Ascending aorta (tissue), 2 donors: ENCODE measurements at regions of chr6 and their contacts with region 1.

Region 1: GRCh38 chr6:30326526-30327260 is at the start of gene TRIM39:
- DNase-seq: peak; percentile 47 to 93
- H3K4me3 ChIP-seq: peak within 1 kb of the TSS; percentile 76 to 95
- H3K27ac ChIP-seq: peak within 1 kb of the TSS; percentile 97 to 99
- H3K4me1 ChIP-seq: peaks cover 0 to 20% of the 10 kb centered on the region in 2 donors
- H3K27me3 ChIP-seq: no peaks in the 10 kb centered on the region
- CTCF ChIP-seq: no peak
- total RNA-seq, gene TRIM39: 2.8 TPM

Region 2: GRCh38 chr6:29632789-29633533 is 693.7 kb before region 1 on chr6 and contains the start of gene GABBR1:
- intact Hi-C with region 1: loop called (anchors 10 kb)
- DNase-seq: peak; percentile 42 to 94
- H3K4me3 ChIP-seq: peak within 1 kb of the TSS; percentile 77 to 81
- H3K27ac ChIP-seq: peak within 1 kb of the TSS; percentile 79 to 81
- H3K4me1 ChIP-seq: peaks cover 8 to 17% of the 10 kb centered on the region in 2 donors
- H3K27me3 ChIP-seq: no peaks in the 10 kb centered on the region
- CTCF ChIP-seq: no peak
- total RNA-seq, gene GABBR1: 166 TPM

Region 3: GRCh38 chr6:30100585-30101443 is 225.9 kb before region 1 on chr6:
- intact Hi-C with region 1: no loop called
- DNase-seq: no peak
- H3K4me3 ChIP-seq: peak overlapping the region; percentile 49 to 58
- H3K27ac ChIP-seq: no peak overlapping the region
- H3K4me1 ChIP-seq: peaks cover 7 to 18% of the 10 kb centered on the region in 2 donors
- H3K27me3 ChIP-seq: peaks cover 16% of the 10 kb centered on the region
- CTCF ChIP-seq: no peak

Region 4: GRCh38 chr6:30259140-30260035 is 67.3 kb before region 1 on chr6:
- intact Hi-C with region 1: loop called (anchors 2 kb)
- DNase-seq: peak; percentile 14 to 90
- H3K4me3 ChIP-seq: peak overlapping the region; percentile 82 to 84
- H3K27ac ChIP-seq: peak overlapping the region; percentile 85
- H3K4me1 ChIP-seq: peaks cover 0 to 5% of the 10 kb centered on the region in 2 donors
- H3K27me3 ChIP-seq: no peaks in the 10 kb centered on the region
- CTCF ChIP-seq: peak in 2 of 3 experiments; percentile 41 to 51

Region 5: GRCh38 chr6:30344868-30345671 is 18.4 kb after region 1 on chr6 and contains the start of gene RPP21:
- intact Hi-C with region 1: loop called (anchors 1 kb)
- DNase-seq: peak; percentile 28 to 88
- H3K4me3 ChIP-seq: peak within 1 kb of the TSS; percentile 79 to 85
- H3K27ac ChIP-seq: peak within 1 kb of the TSS; percentile 85 to 86
- H3K4me1 ChIP-seq: peaks cover 0 to 4% of the 10 kb centered on the region in 2 donors
- H3K27me3 ChIP-seq: no peaks in the 10 kb centered on the region
- CTCF ChIP-seq: no peak
- total RNA-seq, gene RPP21: 262 TPM

Region 6: DNA sequence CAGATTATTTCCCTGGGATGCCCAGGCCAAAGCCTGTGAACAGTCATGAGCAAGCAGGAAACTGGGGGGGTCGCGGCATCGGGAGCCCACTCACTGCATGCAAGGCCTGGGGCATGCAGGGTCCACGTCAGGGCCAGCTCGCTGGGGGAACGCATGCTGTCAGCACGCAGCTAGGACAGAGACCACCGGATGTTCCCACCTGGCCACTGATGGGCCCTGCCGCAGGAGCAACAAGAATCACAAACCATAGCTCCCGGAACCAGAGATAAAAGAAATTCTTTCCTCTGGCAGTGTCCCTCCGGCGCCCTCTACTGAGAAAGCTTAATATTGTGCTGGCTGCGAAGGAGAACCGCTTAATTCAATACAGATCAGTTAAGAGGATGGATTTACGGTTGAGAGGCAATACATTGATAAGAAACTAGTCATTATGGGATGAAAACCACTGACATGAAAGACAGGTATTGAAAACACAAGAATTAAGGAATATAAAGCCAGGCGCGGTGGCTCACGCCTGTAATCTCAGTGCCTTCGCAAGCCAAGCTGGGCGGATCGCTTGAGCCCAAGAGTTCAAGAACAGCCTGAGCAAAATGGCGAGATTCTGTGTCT is 753.1 kb after region 1 on chr6:
- intact Hi-C with region 1: no loop called
- DNase-seq: peak in 1 of 2 donors; percentile 78
- H3K4me3 ChIP-seq: peak overlapping the region in 1 of 2 donors; percentile 56
- H3K27ac ChIP-seq: no peak overlapping the region
- H3K4me1 ChIP-seq: peaks cover 0 to 3% of the 10 kb centered on the region in 2 donors
- H3K27me3 ChIP-seq: no peaks in the 10 kb centered on the region
- CTCF ChIP-seq: peak; percentile 48 to 90 (median 81)